ENCODE measurements at regions of chr4 and their contacts with region 1.

Region 1: GRCh38 chr4:111631215-111631999 is 513.8 kb upstream of the FAM241A start:
- DNase-seq: no peak
- H3K4me3 ChIP-seq: no peak overlapping the region
- H3K27ac ChIP-seq: no peak overlapping the region
- H3K27me3 ChIP-seq: no peaks in the 10 kb centered on the region
- CTCF ChIP-seq: peak; percentile 60

Region 2: DNA sequence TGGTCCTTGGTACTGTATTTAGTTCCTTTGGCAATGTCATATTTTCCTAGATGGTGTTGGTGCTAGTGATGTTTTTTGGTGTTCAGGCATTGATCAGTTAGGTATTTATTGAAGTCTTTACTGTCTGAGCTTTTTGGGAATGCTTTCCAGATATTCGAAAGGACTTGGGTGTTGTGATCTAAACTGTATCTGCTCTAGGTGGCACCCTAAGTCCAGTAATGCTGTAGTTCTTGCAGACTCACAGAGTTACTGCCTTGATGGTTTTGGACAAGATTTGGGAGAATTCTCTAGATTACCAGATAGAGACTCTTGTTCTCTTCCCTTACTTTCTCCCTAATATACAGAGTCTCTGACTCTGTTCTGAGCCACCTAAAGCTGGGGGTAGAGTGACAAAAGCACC is 495.0 kb before region 1 on chr4:
- CTCF ChIA-PET with region 1: interaction called, 10 read pairs
- POLR2A ChIA-PET with region 1: no interaction called
- DNase-seq: no peak
- H3K4me3 ChIP-seq: no peak overlapping the region
- H3K27ac ChIP-seq: no peak overlapping the region
- H3K27me3 ChIP-seq: no peaks in the 10 kb centered on the region
- CTCF ChIP-seq: peak; percentile 41

Region 3: DNA sequence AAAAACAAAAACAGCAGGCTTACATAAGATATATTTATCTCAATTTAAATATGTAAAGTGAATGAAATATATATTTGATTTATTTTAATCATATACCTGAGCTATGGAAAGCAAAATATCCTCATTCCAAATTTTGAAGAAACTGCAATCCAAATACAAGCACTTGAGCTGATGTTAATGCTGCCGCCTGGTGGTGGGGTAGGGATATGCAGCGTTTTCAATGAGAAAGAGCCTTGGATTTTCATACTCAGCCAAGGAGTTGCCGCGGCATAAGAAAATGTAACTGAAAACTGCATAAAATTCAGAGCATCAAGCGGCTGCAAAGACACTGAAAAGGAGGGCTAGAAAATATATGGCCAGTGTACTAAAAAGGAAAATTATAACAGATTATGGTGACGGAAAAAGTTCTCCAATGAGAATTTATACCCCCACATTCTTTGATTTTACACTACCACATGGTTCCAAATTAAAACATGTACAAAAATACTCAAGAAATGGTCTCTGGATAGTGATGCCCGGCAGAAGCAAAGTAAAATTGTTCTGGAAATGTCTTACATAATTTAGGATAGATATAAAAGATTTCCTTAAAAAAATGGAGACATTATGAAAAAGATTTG is 348.2 kb before region 1 on chr4:
- CTCF ChIA-PET with region 1: interaction called, 11 read pairs
- POLR2A ChIA-PET with region 1: no interaction called
- DNase-seq: peak; percentile 15
- H3K4me3 ChIP-seq: no peak overlapping the region
- H3K27ac ChIP-seq: no peak overlapping the region
- H3K27me3 ChIP-seq: no peaks in the 10 kb centered on the region
- CTCF ChIP-seq: peak; percentile 90

Region 4: GRCh38 chr4:111400741-111401140 is 230.7 kb before region 1 on chr4:
- CTCF ChIA-PET with region 1: no interaction called
- POLR2A ChIA-PET with region 1: no interaction called
- DNase-seq: peak; percentile 8
- H3K4me3 ChIP-seq: no peak overlapping the region
- H3K27ac ChIP-seq: no peak overlapping the region
- H3K27me3 ChIP-seq: no peaks in the 10 kb centered on the region
- CTCF ChIP-seq: no peak

Region 5: GRCh38 chr4:111492496-111492895 is 138.9 kb before region 1 on chr4:
- CTCF ChIA-PET with region 1: no interaction called
- POLR2A ChIA-PET with region 1: no interaction called
- DNase-seq: no peak
- H3K4me3 ChIP-seq: no peak overlapping the region
- H3K27ac ChIP-seq: no peak overlapping the region
- H3K27me3 ChIP-seq: no peaks in the 10 kb centered on the region
- CTCF ChIP-seq: no peak

Region 6: GRCh38 chr4:111641955-111642579 is 10.7 kb after region 1 on chr4:
- CTCF ChIA-PET with region 1: interaction called, 18 read pairs
- POLR2A ChIA-PET with region 1: no interaction called
- DNase-seq: peak; percentile 64
- H3K4me3 ChIP-seq: no peak overlapping the region
- H3K27ac ChIP-seq: no peak overlapping the region
- H3K27me3 ChIP-seq: no peaks in the 10 kb centered on the region
- CTCF ChIP-seq: peak; percentile 87